Transverse colon (tissue), 4 donors: ENCODE measurements at regions of chr17 and their contacts with region 1.

Region 1: GRCh38 chr17:31834448-31834847 is 24.6 kb downstream of the COPRS start:
- DNase-seq: no peak
- H3K4me3 ChIP-seq: no peak overlapping the region
- H3K27ac ChIP-seq: no peak overlapping the region
- H3K4me1 ChIP-seq: no peaks in the 10 kb centered on the region
- H3K27me3 ChIP-seq: no peaks in the 10 kb centered on the region
- CTCF ChIP-seq: no peak
- EP300 ChIP-seq: no peak
- POLR2A ChIP-seq: no peak

Region 2: DNA sequence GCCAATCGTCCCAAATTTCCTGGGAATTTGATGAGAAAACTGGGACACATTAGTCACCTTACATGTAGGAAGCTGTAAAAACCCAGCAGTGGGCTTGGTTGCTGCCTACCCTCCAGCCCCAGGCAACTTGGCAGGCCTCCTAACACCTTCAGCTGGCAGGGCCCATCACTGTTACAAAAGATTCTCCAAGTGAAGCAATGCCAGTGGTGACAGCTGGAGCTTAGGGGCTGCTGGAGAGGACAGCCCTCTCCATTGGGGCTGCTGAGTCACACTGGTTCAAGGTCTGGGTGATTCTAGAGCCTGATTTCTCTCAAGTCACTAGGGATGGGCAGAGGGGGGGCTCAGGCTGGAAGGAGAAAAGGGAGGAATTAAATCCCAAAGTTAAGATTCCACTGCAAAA is 156.0 kb before region 1 on chr17:
- in situ Hi-C with region 1: no loop called
- intact Hi-C with region 1: loop called (anchors 10 kb)
- DNase-seq: no peak
- H3K4me3 ChIP-seq: no peak overlapping the region
- H3K27ac ChIP-seq: no peak overlapping the region
- H3K4me1 ChIP-seq: no peaks in the 10 kb centered on the region
- H3K27me3 ChIP-seq: peaks cover 4% of the 10 kb centered on the region
- CTCF ChIP-seq: no peak
- EP300 ChIP-seq: no peak
- POLR2A ChIP-seq: no peak